Activated naive CD4-positive, alpha-beta T cell treated with anti-CD3 and anti-CD28 coated beads for 36 hours (primary cell): ENCODE measurements at regions of chr3 and their contacts with region 1.

Region 1: DNA sequence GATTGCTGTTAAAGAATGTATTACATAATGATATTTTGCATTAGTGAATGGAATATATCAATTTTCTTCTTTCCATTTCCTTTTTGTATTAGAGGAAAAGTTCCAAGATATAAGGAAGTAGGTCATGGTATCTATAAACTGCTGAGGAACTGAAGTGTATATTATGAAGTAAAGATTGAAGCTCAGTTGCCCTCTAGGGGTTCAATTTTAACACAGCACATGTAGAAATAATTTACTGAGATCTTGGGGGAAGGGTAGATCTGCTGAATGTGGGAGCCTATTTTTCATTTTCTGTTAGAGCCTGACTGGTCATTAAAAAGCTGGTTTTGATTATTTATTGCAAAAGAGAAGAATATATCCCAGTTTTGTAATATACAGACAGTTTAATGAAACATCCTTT is 45.2 kb downstream of the CMC1 start:
- DNase-seq: no peak
- H3K4me3 Mint-ChIP-seq: no peak overlapping the region
- H3K27ac Mint-ChIP-seq: no peak overlapping the region
- H3K4me1 Mint-ChIP-seq: peaks cover 2% of the 10 kb centered on the region
- H3K27me3 Mint-ChIP-seq: no peaks in the 10 kb centered on the region

Region 2: DNA sequence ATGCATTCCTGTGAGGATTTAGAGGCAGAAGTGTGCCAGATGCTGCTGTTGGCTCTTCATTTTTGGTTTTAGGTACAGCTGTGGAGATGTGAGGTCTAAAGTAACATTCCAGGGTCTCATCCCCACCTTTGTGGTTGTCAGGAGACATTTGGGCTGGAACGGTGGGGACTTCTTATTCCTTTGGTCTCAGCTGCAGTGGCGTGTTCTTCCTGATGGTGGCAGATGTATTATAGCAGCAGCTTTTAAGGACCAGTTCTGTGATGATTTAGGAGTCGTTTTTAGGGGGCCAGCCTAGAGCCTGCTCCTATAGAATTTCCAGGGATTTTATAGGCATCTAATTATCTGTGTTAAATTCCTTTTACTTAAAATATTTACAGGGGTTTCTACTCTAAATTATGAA is 343.5 kb before region 1 on chr3:
- CTCF ChIA-PET with region 1: no interaction called
- intact Hi-C with region 1: loop called (anchors 2 kb)
- DNase-seq: peak; percentile 34
- H3K4me3 Mint-ChIP-seq: no peak overlapping the region
- H3K27ac Mint-ChIP-seq: no peak overlapping the region
- H3K4me1 Mint-ChIP-seq: peaks cover 2% of the 10 kb centered on the region
- H3K27me3 Mint-ChIP-seq: no peaks in the 10 kb centered on the region

Region 3: DNA sequence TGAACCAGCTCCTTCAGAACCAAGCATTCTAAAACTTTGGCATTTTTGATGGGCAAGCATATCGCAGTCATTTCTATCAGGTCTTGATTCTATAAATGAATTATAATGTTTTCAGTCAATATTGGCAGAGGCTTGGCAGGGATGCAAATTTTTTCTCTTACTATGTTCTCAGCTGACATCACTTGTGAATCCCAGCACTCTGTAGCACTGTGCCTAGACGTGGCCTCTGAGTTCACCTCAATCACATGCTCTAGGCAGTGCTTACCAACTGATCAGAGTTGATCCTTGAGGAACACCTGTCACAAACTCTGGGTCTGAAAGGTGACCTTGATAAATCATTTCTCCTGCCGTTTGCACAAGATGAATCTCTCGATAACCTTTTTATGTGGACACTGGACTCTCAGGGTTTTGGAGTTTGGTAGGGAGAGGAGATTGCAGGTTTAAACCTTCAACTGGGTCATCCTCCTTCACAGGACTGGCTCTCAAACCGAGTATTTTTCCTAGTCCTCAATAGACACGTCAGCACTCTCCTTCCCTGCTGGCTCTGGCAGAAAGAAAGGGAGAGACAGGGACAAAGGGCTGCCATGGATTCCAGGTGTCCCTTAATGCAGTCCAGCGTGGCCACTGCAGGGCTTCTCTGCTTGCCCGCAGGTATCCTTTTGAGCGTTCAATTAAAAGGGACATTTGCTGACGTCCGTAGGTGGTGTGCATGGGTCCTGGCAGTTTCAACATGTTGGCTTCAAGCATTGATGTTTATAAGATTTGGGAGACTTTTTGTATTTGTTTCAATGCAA is 267.5 kb before region 1 on chr3:
- CTCF ChIA-PET with region 1: no interaction called
- intact Hi-C with region 1: loop called (anchors 5 kb)
- DNase-seq: no peak
- H3K4me3 Mint-ChIP-seq: no peak overlapping the region
- H3K27ac Mint-ChIP-seq: no peak overlapping the region
- H3K4me1 Mint-ChIP-seq: peaks cover 4% of the 10 kb centered on the region
- H3K27me3 Mint-ChIP-seq: no peaks in the 10 kb centered on the region

Region 4: GRCh38 chr3:28376424-28376823 is 89.8 kb after region 1 on chr3:
- CTCF ChIA-PET with region 1: no interaction called
- intact Hi-C with region 1: no loop called
- DNase-seq: no peak
- H3K4me3 Mint-ChIP-seq: no peak overlapping the region
- H3K27ac Mint-ChIP-seq: no peak overlapping the region
- H3K4me1 Mint-ChIP-seq: no peaks in the 10 kb centered on the region
- H3K27me3 Mint-ChIP-seq: no peaks in the 10 kb centered on the region